Tibial artery (tissue), 4 donors: ENCODE measurements at regions of chr4 and their contacts with region 1.

Region 1: DNA sequence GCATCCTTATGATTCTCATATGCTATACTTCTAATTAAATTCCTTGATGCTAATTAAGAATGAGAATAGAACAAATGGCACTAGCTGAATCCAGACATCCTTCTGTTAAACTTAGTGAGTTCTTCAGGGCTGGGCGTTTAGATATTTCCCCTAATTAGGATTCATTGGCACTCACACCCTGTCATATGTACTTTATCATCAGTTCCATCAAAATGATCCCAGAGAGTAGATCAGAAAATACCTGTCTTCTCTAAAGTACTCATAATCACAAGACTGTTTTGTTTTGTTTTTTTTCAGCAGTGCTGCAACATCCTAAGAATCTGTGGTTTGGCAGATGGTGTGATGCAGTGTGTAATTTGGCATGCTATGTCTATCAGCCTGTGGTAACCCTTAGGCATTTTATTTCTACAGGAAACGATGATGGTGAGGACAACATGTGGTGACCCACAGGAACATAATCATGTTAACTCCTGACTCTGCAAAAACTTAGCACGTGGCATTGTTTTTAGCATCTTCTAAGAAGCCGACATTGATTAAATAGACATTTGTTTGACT is 2528.4 kb downstream of the ARAP2 start:
- DNase-seq: no peak
- H3K4me3 ChIP-seq: no peak overlapping the region
- H3K27ac ChIP-seq: no peak overlapping the region
- H3K4me1 ChIP-seq: no peaks in the 10 kb centered on the region
- H3K27me3 ChIP-seq: no peaks in the 10 kb centered on the region
- CTCF ChIP-seq: no peak

Region 2: DNA sequence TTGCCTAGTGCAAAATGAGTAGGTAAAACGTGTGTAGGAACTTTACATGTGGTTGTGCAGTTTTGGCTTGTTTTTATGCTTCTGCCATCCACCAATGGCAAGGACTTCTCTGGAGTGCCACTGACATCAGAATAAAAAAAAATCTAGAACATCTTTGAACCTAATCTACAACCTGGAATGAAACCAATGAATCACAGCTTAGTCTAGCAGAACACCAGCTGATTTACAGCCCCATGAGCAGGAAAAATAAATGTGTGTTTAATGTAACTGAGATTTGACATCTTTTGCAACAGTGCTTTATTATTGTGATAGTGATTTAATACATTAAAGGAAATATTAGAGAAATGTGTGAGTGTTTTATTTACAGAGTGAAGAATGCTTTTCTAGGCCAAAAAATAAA is 2000.6 kb before region 1 on chr4:
- intact Hi-C with region 1: loop called (anchors 5 kb)
- DNase-seq: no peak
- H3K4me3 ChIP-seq: no peak overlapping the region
- H3K27ac ChIP-seq: no peak overlapping the region
- H3K4me1 ChIP-seq: no peaks in the 10 kb centered on the region
- H3K27me3 ChIP-seq: no peaks in the 10 kb centered on the region
- CTCF ChIP-seq: no peak

Region 3: DNA sequence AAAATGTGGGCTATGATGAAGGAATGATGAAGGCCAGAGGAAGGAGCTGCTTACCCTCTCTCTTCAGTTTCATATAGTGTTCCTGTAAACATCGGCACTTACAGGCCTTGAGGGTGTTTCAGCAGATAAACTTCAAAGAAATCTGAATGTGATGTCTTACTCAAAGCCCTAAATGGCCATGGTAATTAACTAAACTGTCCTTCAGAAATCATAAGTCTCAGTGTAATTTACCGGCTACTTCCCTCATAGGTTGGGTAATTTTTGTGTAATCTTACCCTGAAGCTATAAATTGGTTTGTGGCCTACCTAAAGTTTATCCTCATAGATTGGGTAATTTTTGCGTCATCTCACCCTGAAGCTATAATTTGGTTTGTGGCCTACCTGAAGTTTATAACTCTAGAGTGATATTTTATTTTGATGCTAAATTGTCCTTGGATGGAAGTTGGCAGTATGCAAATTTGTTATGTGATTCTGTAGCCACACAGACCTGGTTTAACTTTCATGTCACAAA is 171.9 kb before region 1 on chr4:
- intact Hi-C with region 1: no loop called
- DNase-seq: no peak
- H3K4me3 ChIP-seq: no peak overlapping the region
- H3K27ac ChIP-seq: no peak overlapping the region
- H3K4me1 ChIP-seq: no peaks in the 10 kb centered on the region
- H3K27me3 ChIP-seq: no peaks in the 10 kb centered on the region
- CTCF ChIP-seq: no peak

Region 4: DNA sequence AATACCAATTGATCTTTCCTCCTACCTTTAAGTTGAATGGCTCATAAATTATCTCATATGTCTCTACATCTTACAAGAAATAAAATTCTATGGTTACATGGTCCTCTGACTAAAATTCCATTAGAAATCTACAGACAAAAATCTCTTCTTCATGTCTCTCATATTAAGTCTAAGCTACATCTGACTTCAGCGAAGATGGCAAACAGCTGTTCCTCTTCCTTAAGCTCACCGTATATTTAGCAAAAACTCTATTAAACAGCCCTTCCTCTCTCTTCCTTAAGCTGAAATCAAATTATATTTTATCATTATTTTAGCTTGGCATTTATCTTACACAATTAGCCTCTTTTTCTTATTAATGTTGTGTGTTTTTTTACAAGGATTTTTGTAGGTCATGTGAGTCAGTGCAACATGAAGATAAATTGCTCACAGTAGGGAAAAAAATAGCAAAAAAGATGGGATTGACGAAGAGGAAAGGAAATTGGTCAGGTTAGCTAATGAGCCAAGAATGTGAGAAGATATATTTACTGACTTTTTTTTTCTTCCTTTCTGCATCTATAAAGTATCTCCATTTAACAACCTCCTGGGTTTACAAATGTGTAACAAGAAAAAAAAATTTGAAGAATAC is 115.6 kb after region 1 on chr4:
- intact Hi-C with region 1: no loop called
- DNase-seq: no peak
- H3K4me3 ChIP-seq: no peak overlapping the region
- H3K27ac ChIP-seq: no peak overlapping the region
- H3K4me1 ChIP-seq: no peaks in the 10 kb centered on the region
- H3K27me3 ChIP-seq: no peaks in the 10 kb centered on the region
- CTCF ChIP-seq: no peak